Posterior cingulate gyrus (tissue), 11 donors: ENCODE measurements at regions of chr17 and their contacts with region 1.

Region 1: DNA sequence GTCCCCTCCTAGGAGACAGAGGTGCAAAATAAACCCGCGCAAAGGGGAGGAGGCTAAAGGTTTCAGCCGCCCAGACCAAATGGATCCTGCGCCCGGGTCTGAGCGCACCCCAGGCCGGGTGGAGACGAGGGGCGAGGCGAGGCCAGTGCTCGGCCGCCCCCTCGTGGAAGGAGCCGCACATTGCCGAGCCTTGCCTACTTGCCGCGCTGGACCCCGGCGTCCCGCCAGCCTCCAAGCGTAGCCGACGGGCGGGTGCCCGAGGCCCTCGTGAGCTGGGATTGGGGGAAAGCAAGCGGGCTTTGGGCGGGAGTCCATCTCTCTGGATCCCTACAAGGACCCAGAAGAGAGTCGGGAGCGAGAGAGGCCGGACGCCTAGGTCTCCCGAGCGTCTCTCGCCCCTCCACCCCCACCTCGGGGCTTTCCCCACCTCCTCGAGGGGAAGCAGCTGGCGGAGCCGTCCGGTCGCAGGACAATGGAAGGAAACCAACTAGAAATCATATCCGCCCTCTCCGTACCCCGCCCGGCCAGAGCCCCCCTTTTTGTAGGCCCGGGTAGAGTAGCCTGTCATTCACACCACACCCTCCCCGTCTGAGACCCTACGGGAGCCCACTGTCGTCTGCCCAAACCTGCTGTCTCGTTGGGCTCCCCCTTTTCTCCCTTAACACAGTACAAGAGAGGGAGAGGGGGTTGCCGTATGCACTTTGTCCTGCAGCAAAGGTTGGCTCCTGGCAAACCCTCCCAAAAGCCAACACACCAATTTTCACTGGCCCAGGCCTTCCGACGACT is 664 bp upstream of the BCL6B start:
- DNase-seq: peak in 9 of 10 donors; percentile 52 to 96 (median 69)

Region 2: DNA sequence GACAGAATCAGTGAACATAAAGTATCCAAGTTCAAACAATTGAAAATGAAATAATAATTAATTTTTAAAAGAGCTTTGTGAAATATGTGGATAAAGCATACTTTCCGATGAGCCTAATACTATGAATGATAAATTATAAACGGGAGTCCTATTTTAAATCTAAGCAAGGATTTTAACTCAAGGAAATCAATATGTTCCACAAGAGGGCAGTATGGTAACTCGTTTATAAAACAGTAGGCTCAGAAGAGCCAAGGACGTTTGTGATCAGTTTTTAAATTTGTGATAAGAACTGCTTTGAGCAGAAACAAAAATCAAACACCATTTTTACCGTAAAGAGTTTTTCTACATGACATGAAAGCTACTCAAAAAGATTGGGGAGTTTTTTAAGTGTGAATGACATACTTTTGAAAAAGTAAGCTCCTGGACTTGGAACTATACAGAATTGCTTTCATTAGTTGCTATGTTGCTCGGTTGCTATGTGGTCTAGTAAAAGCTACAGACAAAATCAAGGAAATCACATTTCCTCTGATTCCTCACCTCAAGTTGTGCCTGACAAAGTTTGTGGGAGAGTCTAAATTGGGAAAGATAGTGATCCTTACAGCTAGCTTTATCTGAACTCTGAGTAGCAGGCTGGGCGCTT is 178.8 kb before region 1 on chr17:
- intact Hi-C with region 1: loop called (anchors 5 kb)
- DNase-seq: no peak

Region 3: DNA sequence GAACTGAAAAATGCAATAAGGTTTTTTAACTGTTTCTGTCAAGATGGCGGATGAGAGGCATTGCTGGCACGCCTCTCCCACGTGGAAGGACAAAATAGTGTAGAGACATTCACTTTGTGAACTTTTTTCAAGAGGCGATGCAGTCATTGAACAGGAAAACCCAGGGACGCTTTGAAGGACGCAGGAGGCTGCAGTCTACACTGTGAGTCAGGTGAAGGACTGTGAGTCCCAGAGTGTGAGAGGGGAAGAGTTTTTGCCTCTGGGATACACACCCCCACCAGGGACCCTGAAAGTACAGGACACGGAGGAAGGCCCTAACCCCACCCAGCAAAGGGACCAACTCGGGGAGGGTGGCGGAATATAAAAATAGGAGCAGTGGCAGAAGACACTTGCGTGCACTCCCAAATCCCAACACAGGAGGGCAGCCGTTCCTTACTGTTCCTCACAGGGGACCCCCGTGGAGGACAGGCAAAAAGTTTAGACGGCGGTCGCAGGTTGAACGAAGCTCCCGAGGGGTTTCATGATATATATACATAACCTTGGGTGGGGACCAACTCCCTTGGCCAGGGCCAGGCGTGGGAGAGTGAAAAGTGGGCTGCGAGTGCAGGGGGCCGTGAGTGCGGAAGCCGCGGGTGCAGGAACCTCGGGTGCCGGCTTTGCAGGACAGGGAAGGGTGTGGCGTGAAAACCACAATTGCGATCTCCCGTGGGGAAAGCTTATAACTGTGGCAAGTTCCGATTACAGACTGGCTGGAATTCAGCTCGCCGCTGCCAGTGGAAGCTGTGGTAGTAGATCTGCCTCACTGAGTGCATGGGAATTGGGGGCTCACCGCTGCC is 108.4 kb before region 1 on chr17:
- intact Hi-C with region 1: loop called (anchors 5 kb)
- DNase-seq: peak; percentile 47 to 94 (median 72)

Region 4: GRCh38 chr17:6969323-6969726 is 52.9 kb before region 1 on chr17:
- intact Hi-C with region 1: no loop called
- DNase-seq: no peak